ENCODE measurements at regions of chr7 and their contacts with region 1.

Region 1: GRCh38 chr7:80851894-80852476 is 66.9 kb downstream of the SEMA3C start:
- DNase-seq: no peak
- H3K4me3 ChIP-seq: no peak overlapping the region
- H3K27ac ChIP-seq: peak overlapping the region; percentile 37 to 54 (median 47)
- H3K4me1 ChIP-seq: peaks cover 7 to 56% (median 52%) of the 10 kb centered on the region in 4 donors
- H3K27me3 ChIP-seq: no peaks in the 10 kb centered on the region
- CTCF ChIP-seq: no peak
- EP300 ChIP-seq: no peak
- POLR2A ChIP-seq: no peak

Region 2: DNA sequence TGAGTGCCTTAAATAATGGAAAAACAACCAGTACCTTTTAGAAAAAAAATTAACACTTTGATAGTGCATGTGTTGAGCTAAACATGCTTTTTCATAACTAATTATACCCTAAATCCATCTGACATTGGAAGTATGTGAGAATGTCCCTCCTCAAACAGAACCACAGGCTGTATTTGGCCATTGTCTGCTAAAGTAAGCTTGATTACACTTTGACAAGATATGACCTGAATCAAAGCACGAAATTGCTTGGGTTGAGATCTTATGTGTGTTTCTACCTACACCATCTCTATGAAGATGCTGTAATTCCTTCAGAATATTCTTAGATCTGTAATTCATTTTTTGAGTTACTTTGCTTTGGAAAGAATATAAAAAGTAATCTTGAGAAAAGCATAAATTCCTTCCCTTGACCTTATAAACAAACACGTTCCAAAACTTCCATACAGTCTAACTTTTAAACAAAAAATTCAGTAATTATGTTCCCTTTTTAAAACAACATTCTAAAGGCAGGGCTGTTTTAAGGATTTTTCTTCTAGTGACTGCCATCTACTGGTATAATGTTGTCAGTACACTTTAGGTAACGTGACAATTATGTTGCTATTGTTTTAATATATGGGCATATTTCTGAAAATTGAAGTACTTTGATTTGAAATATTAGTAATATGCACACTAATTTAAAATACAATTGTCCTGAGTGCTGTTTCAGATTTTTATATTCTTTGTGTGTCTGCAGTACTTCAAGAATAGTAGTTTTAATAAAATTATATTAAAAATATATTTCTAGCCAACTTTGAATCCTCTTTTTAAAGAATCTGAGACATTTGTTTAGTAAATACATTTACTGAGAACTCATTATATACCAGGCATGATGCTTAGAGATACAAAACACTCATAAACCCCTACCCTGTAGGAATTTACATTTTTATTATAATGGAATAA is 192.6 kb before region 1 on chr7:
- intact Hi-C with region 1: no loop called
- DNase-seq: no peak
- H3K4me3 ChIP-seq: no peak overlapping the region
- H3K27ac ChIP-seq: no peak overlapping the region
- H3K4me1 ChIP-seq: peaks cover 0 to 21% (median 0%) of the 10 kb centered on the region in 4 donors
- H3K27me3 ChIP-seq: no peaks in the 10 kb centered on the region
- CTCF ChIP-seq: peak; percentile 71 to 82 (median 80)
- EP300 ChIP-seq: no peak
- POLR2A ChIP-seq: no peak

Region 3: DNA sequence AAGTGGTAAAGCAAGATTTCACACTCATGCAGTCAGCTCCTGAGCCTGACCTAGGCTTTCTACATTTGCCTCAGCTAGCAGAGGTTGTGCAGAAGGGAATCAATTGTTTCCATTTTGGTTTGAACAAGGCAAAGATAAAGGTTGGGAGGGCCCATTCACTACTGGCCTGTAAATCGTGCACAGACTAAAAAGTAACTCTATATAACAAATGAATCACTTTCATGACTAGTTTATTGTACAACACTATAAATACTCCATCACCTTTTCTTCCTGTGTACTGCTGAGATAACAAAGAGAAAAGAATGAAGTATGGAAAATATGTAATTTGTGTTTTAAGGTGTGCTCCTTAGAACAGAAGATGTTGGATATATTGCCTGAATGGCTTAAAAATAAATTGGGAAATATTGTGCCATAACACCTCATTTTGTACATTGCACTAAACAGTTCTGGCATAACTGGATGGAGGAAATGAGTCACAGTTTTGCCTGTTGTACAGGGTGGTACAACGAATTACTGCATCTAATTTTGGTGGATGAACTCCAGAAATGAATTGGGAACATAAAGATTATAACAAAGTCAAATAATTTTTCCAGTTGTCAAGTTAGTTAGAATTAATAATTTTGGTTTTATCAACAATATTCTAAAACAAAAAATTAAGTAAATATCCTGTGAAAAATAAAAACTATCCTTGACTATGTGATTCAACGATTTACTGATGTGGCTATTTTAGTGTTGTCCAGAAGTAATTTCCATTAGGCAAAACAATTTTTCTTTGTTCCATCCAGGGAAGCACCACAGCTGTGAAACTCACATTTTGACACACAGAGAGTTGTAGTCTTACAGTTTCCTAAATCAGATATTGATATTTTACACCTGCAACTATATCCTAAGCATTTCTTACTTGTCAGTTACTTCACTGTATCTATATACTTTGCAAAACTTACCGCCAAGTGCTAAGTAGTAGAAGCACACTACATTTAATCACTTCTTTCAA is 48.9 kb after region 1 on chr7:
- intact Hi-C with region 1: loop called (anchors 5 kb)
- DNase-seq: no peak
- H3K4me3 ChIP-seq: no peak overlapping the region
- H3K27ac ChIP-seq: peak overlapping the region; percentile 49 to 60 (median 58)
- H3K4me1 ChIP-seq: peaks cover 9 to 56% (median 44%) of the 10 kb centered on the region in 4 donors
- H3K27me3 ChIP-seq: no peaks in the 10 kb centered on the region
- CTCF ChIP-seq: no peak
- EP300 ChIP-seq: no peak
- POLR2A ChIP-seq: no peak

Measured in esophagus muscularis mucosa (tissue), 4 donors.